Ovary (tissue), 10 donors: ENCODE measurements at regions of chr3 and their contacts with region 1.

Region 1: DNA sequence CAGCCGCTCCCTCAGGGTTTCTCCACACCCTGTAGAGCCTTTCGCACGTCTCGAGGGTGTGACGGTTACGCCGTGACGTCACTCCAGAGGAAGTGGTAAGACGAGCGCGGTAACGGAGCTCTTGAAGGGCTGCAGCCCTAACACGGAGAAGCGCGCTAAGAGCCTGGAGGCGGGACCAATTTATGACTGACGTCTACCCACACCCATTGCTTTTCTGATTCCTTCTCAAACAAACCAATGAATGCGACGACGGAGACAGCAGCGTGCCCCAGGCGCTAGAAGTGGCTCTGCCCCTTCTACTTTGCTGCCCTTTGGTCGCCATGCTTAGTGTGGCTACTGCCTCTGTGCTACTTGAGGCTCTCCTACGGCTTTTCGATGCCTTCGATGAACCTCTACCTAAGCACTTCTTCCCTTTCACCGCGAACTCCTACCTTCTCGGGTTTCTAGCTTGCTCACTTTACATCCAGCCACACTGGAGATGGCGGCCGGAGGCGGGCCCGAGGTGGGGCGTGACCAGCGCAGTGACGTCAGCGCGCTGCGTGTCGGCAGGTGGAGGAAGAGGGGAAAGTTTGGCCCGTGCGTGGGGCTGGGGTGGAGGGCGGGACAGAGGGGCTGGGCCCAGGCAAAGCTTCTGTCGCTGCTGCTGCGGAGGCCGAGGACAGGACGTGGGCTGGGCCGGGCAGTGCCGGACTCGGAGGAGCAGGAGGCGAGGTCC is at the start of gene OXSR1:
- DNase-seq: peak; percentile 97 to 99 (median 98)
- H3K4me3 ChIP-seq: peak within 1 kb of the TSS; percentile 100
- H3K27ac ChIP-seq: peak within 1 kb of the TSS; percentile 89 to 93
- H3K4me1 ChIP-seq: peaks cover 10% of the 10 kb centered on the region
- H3K27me3 ChIP-seq: no peaks in the 10 kb centered on the region
- CTCF ChIP-seq: no peak
- EP300 ChIP-seq: peak; percentile 86
- POLR2A ChIP-seq: peak; percentile 81
- total RNA-seq, gene OXSR1: 17.0 to 41.1 (median 29.4) TPM

Region 2: DNA sequence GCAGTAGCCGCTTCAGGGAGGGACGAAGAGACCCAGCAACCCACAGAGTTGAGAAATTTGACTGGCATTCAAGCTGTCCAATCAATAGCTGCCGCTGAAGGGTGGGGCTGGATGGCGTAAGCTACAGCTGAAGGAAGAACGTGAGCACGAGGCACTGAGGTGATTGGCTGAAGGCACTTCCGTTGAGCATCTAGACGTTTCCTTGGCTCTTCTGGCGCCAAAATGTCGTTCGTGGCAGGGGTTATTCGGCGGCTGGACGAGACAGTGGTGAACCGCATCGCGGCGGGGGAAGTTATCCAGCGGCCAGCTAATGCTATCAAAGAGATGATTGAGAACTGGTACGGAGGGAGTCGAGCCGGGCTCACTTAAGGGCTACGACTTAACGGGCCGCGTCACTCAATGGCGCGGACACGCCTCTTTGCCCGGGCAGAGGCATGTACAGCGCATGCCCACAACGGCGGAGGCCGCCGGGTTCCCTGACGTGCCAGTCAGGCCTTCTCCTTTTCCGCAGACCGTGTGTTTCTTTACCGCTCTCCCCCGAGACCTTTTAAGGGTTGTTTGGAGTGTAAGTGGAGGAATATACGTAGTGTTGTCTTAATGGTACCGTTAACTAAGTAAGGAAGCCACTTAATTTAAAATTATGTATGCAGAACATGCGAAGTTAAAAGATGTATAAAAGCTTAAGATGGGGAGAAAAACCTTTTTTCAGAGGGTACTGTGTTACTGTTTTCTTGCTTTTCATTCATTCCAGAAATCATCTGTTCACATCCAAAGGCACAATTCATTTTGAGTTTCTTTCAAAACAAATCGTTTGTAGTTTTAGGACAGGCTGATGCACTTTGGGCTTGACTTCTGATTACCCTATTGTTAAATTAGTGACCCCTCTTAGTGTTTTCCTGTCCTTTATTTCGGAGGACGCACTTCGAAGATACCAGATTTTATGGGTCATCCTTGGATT is 1171.5 kb before region 1 on chr3 and contains the start of gene MLH1:
- intact Hi-C with region 1: loop called in 1 of 4 experiments (anchors 10 kb)
- DNase-seq: peak; percentile 96 to 100 (median 98)
- H3K4me3 ChIP-seq: peak within 1 kb of the TSS; percentile 84
- H3K27ac ChIP-seq: peak within 1 kb of the TSS; percentile 98
- H3K4me1 ChIP-seq: peaks cover 5% of the 10 kb centered on the region
- H3K27me3 ChIP-seq: no peaks in the 10 kb centered on the region
- CTCF ChIP-seq: peak in 1 of 3 donors; percentile 20
- EP300 ChIP-seq: peak; percentile 81
- POLR2A ChIP-seq: peak; percentile 76
- total RNA-seq, gene MLH1: 16.8 to 31.0 (median 21.4) TPM

Region 3: DNA sequence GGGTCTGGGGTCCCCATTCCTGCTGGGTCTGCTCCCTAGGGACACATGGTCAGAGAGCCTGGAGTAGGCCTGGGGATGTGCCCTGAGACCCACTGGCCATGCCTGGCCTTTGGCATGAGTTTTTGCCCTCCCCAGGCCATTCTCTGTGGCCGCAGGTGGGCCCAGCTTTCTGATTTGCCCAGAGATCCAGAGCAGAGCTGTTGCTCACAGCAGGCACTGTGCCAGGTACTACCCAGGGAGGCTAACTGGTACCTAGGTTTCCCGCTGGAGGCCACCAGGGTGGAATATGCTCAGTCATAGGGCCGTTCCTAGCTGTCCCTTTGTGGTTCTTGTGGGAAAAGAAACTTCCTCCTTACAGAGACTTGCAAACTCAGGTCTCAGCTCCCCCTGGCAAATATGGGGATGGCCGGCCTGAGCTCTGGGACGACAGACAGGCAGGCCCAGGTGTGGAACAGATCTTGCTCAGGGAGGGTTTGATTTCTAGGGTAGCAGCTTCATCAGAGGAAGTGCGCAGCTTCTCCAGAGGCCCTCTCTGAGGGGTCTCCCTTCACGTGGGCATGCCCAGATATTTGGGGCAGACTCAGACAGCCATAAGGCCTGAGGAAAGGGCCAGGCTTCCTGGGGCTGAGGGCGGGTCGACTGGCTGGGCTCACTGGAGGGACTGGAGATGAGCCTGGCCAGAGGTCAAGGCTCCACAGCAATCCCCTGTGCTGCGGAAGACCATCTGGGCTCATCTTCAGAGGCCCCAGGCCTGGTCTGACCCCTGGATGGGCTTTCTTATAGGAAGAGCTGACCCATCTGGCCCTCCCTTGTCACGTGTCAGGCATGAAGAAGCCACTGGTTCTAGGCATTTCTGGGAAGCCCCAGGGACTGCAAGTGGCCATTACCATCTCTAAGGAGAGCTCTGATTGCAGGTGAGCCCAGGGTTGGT is 56.2 kb before region 1 on chr3:
- intact Hi-C with region 1: no loop called
- DNase-seq: no peak
- H3K4me3 ChIP-seq: no peak overlapping the region
- H3K27ac ChIP-seq: no peak overlapping the region
- H3K4me1 ChIP-seq: no peaks in the 10 kb centered on the region
- H3K27me3 ChIP-seq: no peaks in the 10 kb centered on the region
- CTCF ChIP-seq: no peak
- EP300 ChIP-seq: no peak
- POLR2A ChIP-seq: no peak

Region 4: DNA sequence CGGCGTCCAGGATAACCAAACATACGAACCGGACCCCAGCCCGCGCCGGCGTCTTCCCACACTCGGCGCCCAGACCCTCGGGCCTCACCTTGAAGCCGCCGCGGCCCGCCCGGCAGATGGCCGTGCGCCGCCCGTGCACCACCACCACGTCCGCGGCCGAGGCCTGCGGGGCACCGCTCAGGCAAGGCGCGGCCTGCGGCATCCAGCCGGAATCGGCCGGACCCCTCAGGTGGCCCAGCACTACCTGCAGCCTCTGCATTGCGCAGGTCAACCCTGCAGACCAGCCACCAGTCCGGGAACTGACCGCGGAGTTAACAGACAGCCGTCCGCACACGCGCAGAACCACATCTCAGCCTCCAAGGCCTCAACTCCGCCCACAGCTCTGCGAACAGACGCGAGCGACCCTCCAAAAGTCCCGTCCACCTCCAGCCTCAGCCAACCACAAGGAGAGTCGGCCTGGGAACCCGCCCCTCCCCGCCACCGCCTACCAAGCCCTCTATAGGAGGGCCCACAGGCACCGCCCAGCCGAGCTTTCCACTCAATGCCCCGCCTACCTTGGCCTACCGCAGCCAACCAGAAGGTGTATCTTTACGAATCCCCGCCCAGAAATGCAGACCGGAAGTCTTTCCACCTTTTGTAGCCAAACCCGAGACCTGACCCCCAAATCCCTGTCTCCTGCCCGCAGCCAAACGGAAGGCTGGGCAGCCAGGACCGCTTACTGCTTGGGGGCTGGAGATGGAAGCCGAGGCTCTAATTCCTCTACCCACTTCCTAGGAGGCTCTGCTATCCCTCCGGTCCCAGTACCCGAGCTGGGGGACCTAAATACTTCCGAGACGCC is 28.1 kb before region 1 on chr3 and contains the start of gene ACAA1:
- intact Hi-C with region 1: loop called in 2 of 4 experiments (anchors 2 kb)
- DNase-seq: peak; percentile 99 to 100 (median 100)
- H3K4me3 ChIP-seq: peak within 1 kb of the TSS; percentile 96
- H3K27ac ChIP-seq: peak within 1 kb of the TSS; percentile 71 to 94
- H3K4me1 ChIP-seq: peaks cover 21% of the 10 kb centered on the region
- H3K27me3 ChIP-seq: no peaks in the 10 kb centered on the region
- CTCF ChIP-seq: peak in 1 of 3 donors; percentile 15
- EP300 ChIP-seq: no peak
- POLR2A ChIP-seq: peak; percentile 88
- total RNA-seq, gene ACAA1: 27.1 to 50.4 (median 44.9) TPM

Region 5: GRCh38 chr3:38222032-38222634 is 57.0 kb after region 1 on chr3:
- intact Hi-C with region 1: no loop called
- DNase-seq: no peak
- H3K4me3 ChIP-seq: no peak overlapping the region
- H3K27ac ChIP-seq: no peak overlapping the region
- H3K4me1 ChIP-seq: no peaks in the 10 kb centered on the region
- H3K27me3 ChIP-seq: no peaks in the 10 kb centered on the region
- CTCF ChIP-seq: no peak
- EP300 ChIP-seq: no peak
- POLR2A ChIP-seq: no peak

Region 6: DNA sequence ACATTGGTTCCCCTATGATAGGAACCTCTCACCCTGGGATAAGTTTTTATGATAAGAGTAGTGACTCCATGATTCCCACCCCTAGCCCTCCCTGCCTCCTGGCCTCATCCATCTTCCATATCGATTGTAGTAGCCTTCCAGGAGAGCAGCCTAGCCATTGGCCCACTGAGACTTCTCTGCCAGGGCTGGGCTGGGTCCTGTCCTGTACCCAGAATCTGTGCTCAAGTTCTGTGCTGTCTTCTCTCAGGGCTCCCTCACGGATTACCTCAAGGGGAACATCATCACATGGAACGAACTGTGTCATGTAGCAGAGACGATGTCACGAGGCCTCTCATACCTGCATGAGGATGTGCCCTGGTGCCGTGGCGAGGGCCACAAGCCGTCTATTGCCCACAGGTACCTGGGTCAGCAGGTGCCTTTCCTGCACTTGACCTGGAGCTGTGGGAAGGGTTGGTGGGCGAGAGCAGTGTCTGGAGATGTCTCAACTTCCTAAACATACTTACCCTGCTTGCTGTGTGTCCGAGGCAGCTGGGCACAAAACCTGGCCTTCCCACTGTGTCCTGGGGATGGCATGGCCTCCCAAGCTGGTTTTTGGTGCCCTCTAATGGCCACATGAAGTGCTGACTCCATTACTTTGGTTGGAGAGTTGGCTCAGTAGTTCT is 314.4 kb after region 1 on chr3:
- intact Hi-C with region 1: loop called in 1 of 4 experiments (anchors 10 kb)
- DNase-seq: peak; percentile 57 to 69 (median 64)
- H3K4me3 ChIP-seq: no peak overlapping the region
- H3K27ac ChIP-seq: no peak overlapping the region
- H3K4me1 ChIP-seq: peaks cover 2% of the 10 kb centered on the region
- H3K27me3 ChIP-seq: no peaks in the 10 kb centered on the region
- CTCF ChIP-seq: peak; percentile 67 to 79 (median 69)
- EP300 ChIP-seq: no peak
- POLR2A ChIP-seq: no peak

Region 7: GRCh38 chr3:38548159-38548931 is 383.2 kb after region 1 on chr3:
- intact Hi-C with region 1: no loop called
- DNase-seq: no peak
- H3K4me3 ChIP-seq: no peak overlapping the region
- H3K27ac ChIP-seq: no peak overlapping the region
- H3K4me1 ChIP-seq: no peaks in the 10 kb centered on the region
- H3K27me3 ChIP-seq: no peaks in the 10 kb centered on the region
- CTCF ChIP-seq: no peak
- EP300 ChIP-seq: no peak
- POLR2A ChIP-seq: no peak